Dendritic cell treated with granulocyte-macrophage colony-stimulating factor and Interleukin-4, amounts not matched to agents 40 ng/mL and 50 ng/mL, for 4 days (primary cell): ENCODE measurements at regions of chr13 and their contacts with region 1.

Region 1: GRCh38 chr13:100235311-100235901 is 146.5 kb downstream of the PCCA start:
- H3K4me3 Mint-ChIP-seq: peak overlapping the region; percentile 51
- H3K27ac Mint-ChIP-seq: no peak overlapping the region
- H3K4me1 Mint-ChIP-seq: peaks cover 8% of the 10 kb centered on the region
- H3K27me3 Mint-ChIP-seq: no peaks in the 10 kb centered on the region

Region 2: DNA sequence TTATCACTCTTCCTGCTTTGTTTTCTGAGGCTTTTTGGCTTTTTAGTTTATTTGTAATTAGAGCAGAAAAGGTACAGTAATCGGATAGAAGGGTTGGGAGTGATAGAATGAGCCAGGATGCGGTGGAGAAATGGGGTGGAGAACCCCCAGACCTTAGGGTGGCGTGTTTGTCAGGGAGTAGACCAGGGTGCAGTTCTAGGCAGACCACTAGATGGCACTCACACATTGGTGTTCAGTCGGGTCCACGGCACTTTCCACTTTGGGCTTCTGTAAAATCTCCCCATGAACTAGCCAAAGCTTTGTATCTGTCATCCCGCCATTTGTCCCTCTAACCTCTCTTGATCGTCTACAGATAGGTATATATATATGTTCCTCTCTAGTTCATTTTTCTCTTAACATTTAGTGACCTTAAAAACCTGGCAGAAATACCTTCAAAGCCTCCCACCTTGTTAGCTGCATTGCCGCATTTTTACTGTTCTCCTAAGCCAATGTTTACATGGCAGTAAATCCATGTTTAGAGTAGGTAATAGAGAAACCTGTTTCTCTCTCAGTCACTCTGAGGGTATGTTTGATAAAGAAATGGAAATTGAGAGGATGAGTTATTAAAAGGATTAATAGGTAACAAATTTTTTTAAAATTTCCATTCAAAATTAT is 579.2 kb before region 1 on chr13:
- intact Hi-C with region 1: loop called (anchors 2 kb)
- H3K4me3 Mint-ChIP-seq: no peak overlapping the region
- H3K27ac Mint-ChIP-seq: no peak overlapping the region
- H3K4me1 Mint-ChIP-seq: peaks cover 22% of the 10 kb centered on the region
- H3K27me3 Mint-ChIP-seq: peaks cover 48% of the 10 kb centered on the region

Region 3: GRCh38 chr13:99916366-99917103 is 318.9 kb before region 1 on chr13:
- intact Hi-C with region 1: loop called (anchors 1 kb)
- H3K4me3 Mint-ChIP-seq: no peak overlapping the region
- H3K27ac Mint-ChIP-seq: no peak overlapping the region
- H3K4me1 Mint-ChIP-seq: no peaks in the 10 kb centered on the region
- H3K27me3 Mint-ChIP-seq: peaks cover 43% of the 10 kb centered on the region

Region 4: DNA sequence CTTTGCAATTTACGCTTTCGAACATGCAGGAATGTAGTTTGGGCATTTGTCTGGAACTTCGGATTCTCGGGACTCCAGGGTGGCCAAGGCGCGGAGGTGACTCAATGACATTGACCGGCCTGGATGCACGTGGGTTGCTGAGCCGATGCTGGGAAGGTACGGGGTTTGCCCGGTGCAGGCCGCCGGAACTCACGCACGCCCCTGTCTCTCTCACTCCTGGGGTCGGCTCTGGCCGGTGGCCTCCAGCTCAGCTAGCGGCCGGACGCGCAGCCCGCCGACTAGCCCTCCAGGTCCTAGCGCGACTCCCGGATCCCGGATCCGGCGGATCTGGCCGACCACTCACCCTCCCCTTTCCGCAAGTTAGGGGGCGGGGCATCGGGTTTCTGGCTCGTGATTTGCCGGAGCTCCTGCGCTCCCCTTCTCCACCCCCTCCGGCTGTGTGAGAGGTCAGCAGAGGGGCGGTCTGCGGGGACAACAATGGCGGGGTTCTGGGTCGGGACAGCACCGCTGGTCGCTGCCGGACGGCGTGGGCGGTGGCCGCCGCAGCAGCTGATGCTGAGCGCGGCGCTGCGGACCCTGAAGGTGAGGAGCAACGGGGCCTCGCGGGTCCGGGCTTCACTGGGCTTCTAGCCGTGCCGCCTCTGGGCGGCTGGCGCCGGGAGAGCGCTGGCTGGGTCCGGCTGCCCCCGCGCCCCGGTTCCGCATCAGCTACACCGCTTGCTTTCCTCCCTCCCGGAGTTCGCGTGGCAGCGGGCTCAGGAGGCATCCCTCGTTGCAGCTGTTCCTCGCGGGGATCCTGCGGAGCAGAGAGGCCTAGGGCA is 146.6 kb before region 1 on chr13 and contains the start of gene PCCA:
- intact Hi-C with region 1: loop called (anchors 10 kb)
- H3K4me3 Mint-ChIP-seq: peak within 1 kb of the TSS; percentile 90
- H3K27ac Mint-ChIP-seq: peak within 1 kb of the TSS; percentile 78
- H3K4me1 Mint-ChIP-seq: peaks cover 18% of the 10 kb centered on the region
- H3K27me3 Mint-ChIP-seq: peaks cover 6% of the 10 kb centered on the region

Region 5: GRCh38 chr13:100514788-100515409 is 279.5 kb after region 1 on chr13:
- intact Hi-C with region 1: loop called (anchors 5 kb)
- H3K4me3 Mint-ChIP-seq: no peak overlapping the region
- H3K27ac Mint-ChIP-seq: no peak overlapping the region
- H3K4me1 Mint-ChIP-seq: peaks cover 21% of the 10 kb centered on the region
- H3K27me3 Mint-ChIP-seq: peaks cover 19% of the 10 kb centered on the region